ENCODE measurements at regions of chr18 and their contacts with region 1.

Region 1: DNA sequence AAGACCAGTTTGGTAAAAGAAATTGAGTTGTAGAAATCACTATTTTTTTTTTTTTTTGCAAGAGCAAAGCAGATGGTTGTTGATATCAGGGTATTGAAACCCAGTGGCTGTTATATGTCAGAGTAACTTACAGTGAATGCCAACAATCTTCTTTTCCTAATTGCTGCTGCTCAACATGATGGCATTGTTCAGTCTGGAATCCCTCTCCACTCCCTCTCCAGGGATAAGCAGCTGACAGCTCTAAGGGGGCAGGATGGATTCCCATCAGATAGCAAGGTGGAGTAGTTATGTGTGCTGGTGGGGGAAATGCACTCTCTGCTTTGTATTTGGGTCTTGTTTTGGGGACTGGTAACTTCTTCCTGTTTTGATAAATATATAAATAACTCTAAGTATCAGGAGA is 200.0 kb downstream of the PIK3C3 start:
- DNase-seq: peak in 2 of 5 donors; percentile 32 to 42
- ATAC-seq: peak; percentile 90 to 99 (median 94)
- H3K4me3 ChIP-seq: no peak overlapping the region
- H3K27ac ChIP-seq: peak overlapping the region in 1 of 12 donors; percentile 25
- H3K4me1 ChIP-seq: peaks cover 0 to 35% (median 8%) of the 10 kb centered on the region in 12 donors
- H3K27me3 ChIP-seq: no peaks in the 10 kb centered on the region
- CTCF ChIP-seq: no peak
- POLR2A ChIP-seq: no peak

Region 2: GRCh38 chr18:42290318-42291307 is 135.6 kb after region 1 on chr18:
- intact Hi-C with region 1: loop called in 1 of 10 experiments (anchors 2 kb)
- DNase-seq: peak in 4 of 5 donors; percentile 19 to 73 (median 36)
- ATAC-seq: peak; percentile 91 to 99 (median 99)
- H3K4me3 ChIP-seq: no peak overlapping the region
- H3K27ac ChIP-seq: peak overlapping the region in 10 of 12 donors; percentile 6 to 84 (median 60)
- H3K4me1 ChIP-seq: peaks cover 0 to 5% (median 1%) of the 10 kb centered on the region in 12 donors
- H3K27me3 ChIP-seq: no peaks in the 10 kb centered on the region
- CTCF ChIP-seq: no peak
- POLR2A ChIP-seq: no peak

Measured in heart left ventricle (tissue), 16 donors.